CD8-positive, alpha-beta T cell (primary cell): ENCODE measurements at regions of chr1 and their contacts with region 1.

Region 1: DNA sequence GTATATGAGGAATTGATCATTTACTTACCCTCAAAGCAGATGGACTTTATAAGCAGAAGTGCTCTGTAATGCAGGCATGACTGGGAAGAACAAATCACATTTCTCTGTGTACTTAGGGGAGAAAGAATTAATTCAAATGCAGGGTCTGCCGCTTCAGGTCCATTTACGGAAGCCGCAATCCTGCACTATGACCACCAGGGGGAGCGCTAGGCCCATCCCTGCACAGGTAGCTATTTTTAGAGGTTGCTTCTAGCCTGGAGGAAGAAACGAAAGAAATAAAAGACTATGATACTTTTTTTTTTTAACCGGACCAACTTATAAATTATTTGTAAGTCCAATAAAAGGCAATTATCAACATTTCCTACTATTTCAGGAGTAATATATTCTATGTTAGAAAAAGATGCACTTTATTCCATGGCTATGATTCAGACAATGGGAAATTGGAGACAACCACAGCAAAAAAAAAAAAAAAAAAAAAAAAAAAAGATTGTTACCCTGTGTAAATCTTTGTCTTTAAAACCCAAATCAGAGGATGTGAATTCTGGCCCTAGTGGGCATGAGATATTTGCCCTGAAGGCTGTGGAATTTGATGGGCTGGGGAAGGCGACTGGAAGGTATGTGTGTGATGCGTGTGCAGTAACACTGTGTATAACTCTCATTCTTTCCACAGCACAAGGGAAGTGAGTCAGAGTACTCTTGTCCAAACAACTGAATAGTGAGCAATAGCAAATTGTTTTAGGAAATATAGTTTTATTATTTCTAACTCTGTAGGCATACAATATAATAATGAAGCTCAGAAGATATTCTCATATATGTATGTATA is 12.9 kb upstream of the FYB2 start:
- DNase-seq: peak; percentile 23 to 81 (median 66)
- ATAC-seq: peak; percentile 65
- H3K4me3 ChIP-seq: no peak overlapping the region
- H3K4me3 Mint-ChIP-seq: no peak overlapping the region
- H3K27ac ChIP-seq: no peak overlapping the region
- H3K27ac Mint-ChIP-seq: no peak overlapping the region
- H3K4me1 ChIP-seq: no peaks in the 10 kb centered on the region
- H3K4me1 Mint-ChIP-seq: peaks cover 7% of the 10 kb centered on the region
- H3K27me3 ChIP-seq: no peaks in the 10 kb centered on the region
- H3K27me3 Mint-ChIP-seq: peaks cover 24% of the 10 kb centered on the region
- CTCF ChIP-seq: peak; percentile 91

Region 2: DNA sequence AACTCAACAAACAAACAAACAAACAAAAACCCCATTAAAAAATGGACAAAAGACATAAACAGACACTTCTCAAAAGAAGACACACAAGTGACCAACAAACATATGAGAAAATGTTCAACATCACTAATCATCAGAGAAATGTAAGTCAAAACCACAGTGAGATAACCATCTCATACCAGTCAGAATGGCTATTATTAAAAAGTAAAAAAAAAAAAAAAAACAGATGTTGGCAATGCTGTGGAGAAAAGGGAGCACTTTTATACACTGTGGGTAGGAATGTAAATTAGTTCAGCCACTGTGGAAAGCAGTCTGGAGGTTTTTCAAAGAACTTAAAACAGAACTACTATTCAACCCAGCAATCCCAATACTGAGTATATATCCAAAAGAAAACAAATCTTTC is 347.4 kb before region 1 on chr1:
- CTCF ChIA-PET with region 1: no interaction called
- POLR2A ChIA-PET with region 1: no interaction called
- intact Hi-C with region 1: no loop called
- DNase-seq: no peak
- ATAC-seq: no peak
- H3K4me3 ChIP-seq: no peak overlapping the region
- H3K4me3 Mint-ChIP-seq: no peak overlapping the region
- H3K27ac ChIP-seq: no peak overlapping the region
- H3K27ac Mint-ChIP-seq: no peak overlapping the region
- H3K4me1 ChIP-seq: no peaks in the 10 kb centered on the region
- H3K4me1 Mint-ChIP-seq: no peaks in the 10 kb centered on the region
- H3K27me3 ChIP-seq: no peaks in the 10 kb centered on the region
- H3K27me3 Mint-ChIP-seq: peaks cover 8% of the 10 kb centered on the region
- CTCF ChIP-seq: no peak

Region 3: DNA sequence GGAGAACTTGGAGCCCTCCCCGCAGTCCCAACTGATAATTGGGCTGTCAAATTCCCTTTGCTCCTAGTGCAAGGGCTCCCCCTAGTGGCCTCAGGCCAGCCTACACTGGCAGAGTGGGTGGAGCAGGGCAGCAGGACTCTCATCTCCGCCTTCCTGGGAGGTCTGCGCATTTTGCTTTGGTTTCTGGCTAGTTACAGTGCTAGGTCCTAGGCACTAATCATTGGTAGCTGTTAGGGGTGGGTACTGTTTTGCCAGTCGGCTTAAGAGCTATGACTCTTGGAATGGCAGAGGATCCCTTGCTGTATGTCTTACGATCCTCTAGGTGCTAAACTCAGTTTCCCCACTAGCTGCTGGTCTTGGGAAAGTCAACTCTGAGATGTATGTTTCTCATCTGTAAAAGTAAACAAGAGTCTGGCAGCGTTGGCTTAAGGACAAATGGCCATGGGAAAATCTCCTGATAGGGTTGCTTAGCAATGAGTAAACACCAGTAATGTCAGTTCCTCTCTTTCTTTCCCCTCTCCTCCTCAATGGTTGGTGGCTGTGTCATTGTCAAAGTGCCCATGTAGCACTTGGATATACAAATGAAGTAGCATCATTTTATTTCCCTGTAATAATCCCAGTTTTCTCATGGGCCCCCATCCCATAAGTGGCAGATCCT is 10.8 kb before region 1 on chr1:
- CTCF ChIA-PET with region 1: interaction called, 12 read pairs
- POLR2A ChIA-PET with region 1: no interaction called
- intact Hi-C with region 1: no loop called
- DNase-seq: peak; percentile 11 to 66 (median 50)
- ATAC-seq: peak; percentile 40
- H3K4me3 ChIP-seq: no peak overlapping the region
- H3K4me3 Mint-ChIP-seq: no peak overlapping the region
- H3K27ac ChIP-seq: no peak overlapping the region
- H3K27ac Mint-ChIP-seq: no peak overlapping the region
- H3K4me1 ChIP-seq: no peaks in the 10 kb centered on the region
- H3K4me1 Mint-ChIP-seq: no peaks in the 10 kb centered on the region
- H3K27me3 ChIP-seq: no peaks in the 10 kb centered on the region
- H3K27me3 Mint-ChIP-seq: peaks cover 16% of the 10 kb centered on the region
- CTCF ChIP-seq: peak; percentile 54

Region 4: GRCh38 chr1:56843544-56843943 is 11.5 kb after region 1 on chr1:
- CTCF ChIA-PET with region 1: interaction called, 16 read pairs
- POLR2A ChIA-PET with region 1: no interaction called
- intact Hi-C with region 1: no loop called
- DNase-seq: no peak
- ATAC-seq: no peak
- H3K4me3 ChIP-seq: no peak overlapping the region
- H3K4me3 Mint-ChIP-seq: no peak overlapping the region
- H3K27ac ChIP-seq: no peak overlapping the region
- H3K27ac Mint-ChIP-seq: no peak overlapping the region
- H3K4me1 ChIP-seq: no peaks in the 10 kb centered on the region
- H3K4me1 Mint-ChIP-seq: no peaks in the 10 kb centered on the region
- H3K27me3 ChIP-seq: no peaks in the 10 kb centered on the region
- H3K27me3 Mint-ChIP-seq: peaks cover 5% of the 10 kb centered on the region
- CTCF ChIP-seq: no peak

Region 5: DNA sequence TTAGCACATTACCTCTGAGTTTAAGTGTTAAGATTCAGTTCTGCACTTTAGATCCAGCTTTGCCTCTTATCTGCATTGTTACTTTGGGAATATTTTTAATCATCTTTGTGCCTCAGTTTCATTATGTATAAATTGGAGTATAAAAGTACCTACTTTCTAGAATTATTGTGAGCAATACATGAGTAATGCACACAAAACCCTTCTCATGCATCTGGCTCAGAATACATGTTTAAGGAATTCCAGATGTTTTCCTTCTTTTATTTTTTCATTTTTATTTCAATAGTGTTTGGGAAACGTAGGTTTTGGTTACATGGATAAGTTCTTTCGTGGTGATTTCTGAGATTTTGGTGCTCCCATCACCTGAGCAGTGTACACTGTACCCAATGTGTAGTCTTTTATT is 36.7 kb after region 1 on chr1:
- CTCF ChIA-PET with region 1: no interaction called
- POLR2A ChIA-PET with region 1: no interaction called
- intact Hi-C with region 1: loop called in 1 of 2 experiments (anchors 1 kb)
- DNase-seq: no peak
- ATAC-seq: no peak
- H3K4me3 ChIP-seq: no peak overlapping the region
- H3K4me3 Mint-ChIP-seq: no peak overlapping the region
- H3K27ac ChIP-seq: no peak overlapping the region
- H3K27ac Mint-ChIP-seq: no peak overlapping the region
- H3K4me1 ChIP-seq: no peaks in the 10 kb centered on the region
- H3K4me1 Mint-ChIP-seq: no peaks in the 10 kb centered on the region
- H3K27me3 ChIP-seq: no peaks in the 10 kb centered on the region
- H3K27me3 Mint-ChIP-seq: peaks cover 9% of the 10 kb centered on the region
- CTCF ChIP-seq: no peak

Region 6: DNA sequence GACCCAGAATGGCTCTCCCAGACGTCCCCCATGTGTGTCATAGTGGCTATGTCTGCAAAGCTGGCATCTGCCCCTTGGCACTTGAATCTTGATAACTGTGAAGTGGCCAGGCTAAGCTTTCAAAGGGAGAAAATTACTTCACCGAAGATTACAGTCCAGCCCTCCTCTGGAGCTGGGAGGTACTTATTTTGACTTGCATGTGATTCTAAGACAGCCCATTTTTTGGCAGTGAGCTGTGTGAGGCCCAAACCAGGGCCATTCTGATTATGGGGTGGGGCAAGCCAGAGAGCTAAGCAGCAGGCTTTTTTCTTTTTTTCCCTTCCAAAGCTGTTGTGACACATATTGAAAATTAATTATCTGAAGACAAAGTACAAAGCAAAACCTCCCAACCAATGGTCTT is 175.9 kb after region 1 on chr1:
- CTCF ChIA-PET with region 1: no interaction called
- POLR2A ChIA-PET with region 1: no interaction called
- intact Hi-C with region 1: no loop called
- DNase-seq: no peak
- ATAC-seq: no peak
- H3K4me3 ChIP-seq: no peak overlapping the region
- H3K4me3 Mint-ChIP-seq: no peak overlapping the region
- H3K27ac ChIP-seq: no peak overlapping the region
- H3K27ac Mint-ChIP-seq: no peak overlapping the region
- H3K4me1 ChIP-seq: no peaks in the 10 kb centered on the region
- H3K4me1 Mint-ChIP-seq: no peaks in the 10 kb centered on the region
- H3K27me3 ChIP-seq: no peaks in the 10 kb centered on the region
- H3K27me3 Mint-ChIP-seq: peaks cover 9% of the 10 kb centered on the region
- CTCF ChIP-seq: no peak

Region 7: DNA sequence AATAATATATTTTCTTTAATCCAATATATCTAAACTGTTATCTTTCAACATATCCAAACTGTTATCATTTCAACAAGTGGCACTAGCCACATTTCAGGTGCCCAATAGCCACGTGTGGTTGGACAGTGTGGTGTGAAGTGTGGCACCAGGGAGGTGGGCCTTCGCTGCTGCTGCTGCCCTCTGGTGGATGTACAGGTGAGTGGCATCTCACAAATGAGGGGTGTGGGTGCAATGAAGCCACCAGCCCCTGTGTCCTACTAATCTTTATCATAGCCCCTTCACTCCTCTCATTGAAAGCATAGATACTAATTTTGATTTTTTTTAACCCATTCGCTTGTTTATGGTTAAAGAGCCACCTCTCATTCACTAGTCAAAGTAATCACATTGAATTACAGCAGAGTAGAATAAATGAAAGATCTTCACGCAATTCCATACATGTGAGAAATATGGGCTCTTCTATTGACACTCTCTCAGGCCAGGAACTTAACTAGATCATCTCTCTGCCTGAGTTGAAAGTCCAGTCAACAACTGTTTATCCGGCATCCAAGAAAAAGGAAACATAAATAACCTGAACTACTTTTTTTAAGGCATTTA is 1215.3 kb after region 1 on chr1:
- CTCF ChIA-PET with region 1: no interaction called
- POLR2A ChIA-PET with region 1: no interaction called
- intact Hi-C with region 1: loop called (anchors 2 to 5 kb)
- DNase-seq: peak in 4 of 9 experiments; percentile 5 to 17 (median 16)
- ATAC-seq: no peak
- H3K4me3 ChIP-seq: no peak overlapping the region
- H3K4me3 Mint-ChIP-seq: no peak overlapping the region
- H3K27ac ChIP-seq: no peak overlapping the region
- H3K27ac Mint-ChIP-seq: no peak overlapping the region
- H3K4me1 ChIP-seq: no peaks in the 10 kb centered on the region
- H3K4me1 Mint-ChIP-seq: no peaks in the 10 kb centered on the region
- H3K27me3 ChIP-seq: no peaks in the 10 kb centered on the region
- H3K27me3 Mint-ChIP-seq: no peaks in the 10 kb centered on the region
- CTCF ChIP-seq: peak; percentile 57

Region 8: GRCh38 chr1:58546520-58547308 is 1714.6 kb after region 1 on chr1 and contains the start of gene OMA1:
- CTCF ChIA-PET with region 1: no interaction called
- POLR2A ChIA-PET with region 1: no interaction called
- intact Hi-C with region 1: loop called in 1 of 2 experiments (anchors 2 kb)
- DNase-seq: peak; percentile 95 to 99 (median 98)
- ATAC-seq: peak; percentile 92
- H3K4me3 ChIP-seq: peak within 1 kb of the TSS; percentile 63 to 77
- H3K4me3 Mint-ChIP-seq: peak within 1 kb of the TSS; percentile 97
- H3K27ac ChIP-seq: peak within 1 kb of the TSS; percentile 95 to 97
- H3K27ac Mint-ChIP-seq: peak within 1 kb of the TSS; percentile 99
- H3K4me1 ChIP-seq: peaks cover 12% of the 10 kb centered on the region
- H3K4me1 Mint-ChIP-seq: peaks cover 32% of the 10 kb centered on the region
- H3K27me3 ChIP-seq: no peaks in the 10 kb centered on the region
- H3K27me3 Mint-ChIP-seq: no peaks in the 10 kb centered on the region
- CTCF ChIP-seq: peak; percentile 97
- total RNA-seq, gene OMA1: 25.1 to 31.2 TPM

Region 9: GRCh38 chr1:58652651-58653184 is 1820.6 kb after region 1 on chr1:
- CTCF ChIA-PET with region 1: interaction called, 10 read pairs
- POLR2A ChIA-PET with region 1: no interaction called
- intact Hi-C with region 1: loop called in 1 of 2 experiments (anchors 1 kb)
- DNase-seq: peak; percentile 11 to 83 (median 53)
- ATAC-seq: peak; percentile 90
- H3K4me3 ChIP-seq: no peak overlapping the region
- H3K4me3 Mint-ChIP-seq: no peak overlapping the region
- H3K27ac ChIP-seq: no peak overlapping the region
- H3K27ac Mint-ChIP-seq: no peak overlapping the region
- H3K4me1 ChIP-seq: peaks cover 14% of the 10 kb centered on the region
- H3K4me1 Mint-ChIP-seq: peaks cover 23% of the 10 kb centered on the region
- H3K27me3 ChIP-seq: no peaks in the 10 kb centered on the region
- H3K27me3 Mint-ChIP-seq: no peaks in the 10 kb centered on the region
- CTCF ChIP-seq: peak; percentile 84